Left colon (tissue), 2 donors: ENCODE measurements at regions of chr20 and their contacts with region 1.

Region 1: GRCh38 chr20:41411391-41411847 is 44.8 kb upstream of the EMILIN3 start:
- DNase-seq: no peak
- ATAC-seq: no peak

Region 2: GRCh38 chr20:41205313-41205712 is 206.1 kb before region 1 on chr20:
- intact Hi-C with region 1: no loop called
- DNase-seq: no peak
- ATAC-seq: no peak

Region 3: GRCh38 chr20:41339507-41340326 is 71.7 kb before region 1 on chr20:
- intact Hi-C with region 1: loop called in 1 of 2 experiments (anchors 10 kb)
- DNase-seq: peak; percentile 91 to 94
- ATAC-seq: peak; percentile 74